Pancreas (tissue), 10 donors: ENCODE measurements at regions of chr6 and their contacts with region 1.

Region 1: GRCh38 chr6:36302227-36302976 is 32.5 kb downstream of the PNPLA1 start:
- DNase-seq: peak; percentile 77 to 92 (median 88)
- ATAC-seq: peak; percentile 96 to 99 (median 98)
- H3K4me3 ChIP-seq: no peak overlapping the region
- H3K27ac ChIP-seq: no peak overlapping the region
- H3K4me1 ChIP-seq: no peaks in the 10 kb centered on the region
- H3K27me3 ChIP-seq: no peaks in the 10 kb centered on the region
- CTCF ChIP-seq: peak; percentile 85 to 97 (median 94)

Region 2: DNA sequence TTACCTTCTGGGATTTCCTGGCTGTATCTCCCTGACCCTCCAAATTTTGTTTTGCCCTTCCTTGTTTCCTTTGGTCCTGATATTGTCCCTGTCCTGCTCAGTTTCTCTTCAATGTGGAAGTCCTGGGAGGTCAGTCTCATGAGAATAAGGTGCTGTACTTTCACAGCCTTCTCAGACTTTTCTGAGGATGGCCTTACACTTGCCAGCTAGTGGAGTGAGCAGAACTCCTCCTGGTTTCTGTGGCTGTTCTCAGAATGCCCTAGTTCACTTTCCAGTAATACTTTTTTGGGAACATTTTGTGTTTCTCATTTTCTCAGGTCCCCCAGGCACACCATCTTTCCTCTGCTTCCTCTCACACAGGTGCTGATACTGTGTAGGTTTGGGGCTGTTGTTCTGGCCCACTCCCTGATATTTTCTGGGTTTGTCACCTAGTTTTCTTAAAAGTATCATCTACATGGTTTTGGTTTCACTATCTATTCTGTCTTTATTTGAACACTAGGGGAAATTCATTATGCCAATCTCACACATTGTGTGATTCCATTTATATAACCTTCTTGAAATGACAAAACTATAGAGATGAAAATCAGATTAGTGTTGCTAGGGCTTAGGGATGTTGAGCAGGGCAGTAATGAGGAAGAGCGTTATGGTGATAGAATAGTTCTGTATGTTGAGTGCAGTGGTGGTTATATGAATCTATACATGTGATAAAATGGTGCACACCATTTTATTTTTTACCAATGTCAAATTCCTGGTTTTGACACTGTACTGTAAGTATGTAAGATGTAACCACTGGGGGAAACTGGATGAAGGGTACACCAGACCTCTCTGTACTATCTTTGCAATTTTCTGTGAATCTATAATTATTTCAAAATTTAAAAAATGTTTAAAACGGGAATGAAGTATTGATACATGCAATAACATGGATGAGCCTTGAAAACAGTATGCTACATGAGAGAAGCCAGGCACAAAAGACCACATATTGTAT is 133.1 kb before region 1 on chr6:
- intact Hi-C with region 1: no loop called
- DNase-seq: no peak
- ATAC-seq: no peak
- H3K4me3 ChIP-seq: no peak overlapping the region
- H3K27ac ChIP-seq: no peak overlapping the region
- H3K4me1 ChIP-seq: no peaks in the 10 kb centered on the region
- H3K27me3 ChIP-seq: no peaks in the 10 kb centered on the region
- CTCF ChIP-seq: no peak

Region 3: GRCh38 chr6:36360241-36361054 is 58.0 kb after region 1 on chr6:
- intact Hi-C with region 1: loop called in 2 of 3 experiments (anchors 5 to 10 kb)
- DNase-seq: peak; percentile 58 to 84 (median 78)
- ATAC-seq: peak; percentile 79 to 94 (median 88)
- H3K4me3 ChIP-seq: no peak overlapping the region
- H3K27ac ChIP-seq: peak overlapping the region in 1 of 4 donors; percentile 83
- H3K4me1 ChIP-seq: peaks cover 0 to 42% (median 0%) of the 10 kb centered on the region in 3 donors
- H3K27me3 ChIP-seq: no peaks in the 10 kb centered on the region
- CTCF ChIP-seq: peak; percentile 67 to 73 (median 70)